ENCODE measurements at regions of chr12 and their contacts with region 1.

Region 1: DNA sequence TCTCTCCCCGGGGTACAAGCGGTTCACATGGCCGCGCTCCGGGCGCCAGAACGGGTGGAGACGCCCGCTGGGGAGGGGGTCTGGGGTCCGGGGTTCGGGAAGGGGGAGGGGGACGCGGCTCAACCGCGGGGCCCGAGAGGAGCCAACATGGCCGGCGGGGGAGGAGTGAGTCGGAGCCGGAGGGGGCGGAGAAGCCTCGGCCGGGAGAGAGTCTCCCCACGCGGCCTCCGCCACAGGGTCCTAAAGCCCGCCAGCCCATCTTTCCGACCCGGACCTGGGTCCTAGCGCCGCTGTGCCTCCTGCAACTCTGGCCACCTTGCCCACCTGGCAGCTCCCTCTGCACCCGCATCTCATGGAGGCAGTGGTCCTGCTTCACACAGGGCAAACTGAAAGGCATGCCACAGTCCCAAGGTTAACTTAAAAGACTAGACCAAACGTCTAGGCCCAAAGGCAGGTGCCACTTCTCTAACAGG is at the start of gene BAZ2A:
- DNase-seq: peak; percentile 93
- H3K4me3 ChIP-seq: peak within 1 kb of the TSS; percentile 88 to 100 (median 97)
- H3K27ac ChIP-seq: peak within 1 kb of the TSS; percentile 96 to 98 (median 97)
- H3K4me1 ChIP-seq: peaks cover 0 to 73% (median 71%) of the 10 kb centered on the region in 4 donors
- H3K27me3 ChIP-seq: no peaks in the 10 kb centered on the region
- CTCF ChIP-seq: no peak
- EP300 ChIP-seq: peak in 1 of 4 donors; percentile 34
- POLR2A ChIP-seq: peak in 1 of 2 donors; percentile 8
- total RNA-seq, gene BAZ2A: 39.6 to 91.1 (median 46.8) TPM

Region 2: DNA sequence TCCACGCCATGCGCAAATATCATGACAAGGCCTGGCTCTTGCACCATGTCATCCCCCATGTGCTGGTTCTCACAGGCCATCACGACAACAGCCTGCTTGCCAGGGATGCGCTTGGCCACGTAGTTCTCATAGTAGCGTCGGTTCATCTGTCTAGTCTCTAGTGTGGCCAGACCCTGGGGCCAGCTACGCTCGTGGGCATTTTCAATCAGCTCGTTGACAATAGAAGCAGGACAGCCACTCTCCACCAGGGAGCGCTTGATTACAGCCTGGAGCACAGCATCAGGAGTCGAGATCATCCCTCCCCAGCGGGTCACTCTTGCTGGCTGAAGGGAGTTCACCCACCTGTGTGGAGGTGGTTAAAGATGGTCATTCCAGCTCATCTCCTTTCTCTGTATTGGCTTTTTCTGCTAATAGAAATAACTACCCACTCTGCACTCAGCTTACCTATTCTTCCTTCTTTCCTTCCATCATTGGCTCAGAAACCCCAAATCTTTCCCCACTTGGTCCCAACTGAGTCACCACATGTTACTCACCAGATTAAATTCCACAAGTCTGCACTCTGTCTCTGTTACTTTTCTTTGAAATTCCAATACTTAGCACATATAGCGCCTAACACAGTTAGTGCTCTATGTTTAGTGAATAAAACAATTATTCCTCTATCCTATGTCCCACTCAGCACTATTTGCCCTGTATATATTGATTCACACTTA is 423.6 kb before region 1 on chr12:
- intact Hi-C with region 1: no loop called
- DNase-seq: peak; percentile 77
- H3K4me3 ChIP-seq: no peak overlapping the region
- H3K27ac ChIP-seq: peak overlapping the region; percentile 12 to 51 (median 36)
- H3K4me1 ChIP-seq: peaks cover 0 to 5% (median 0%) of the 10 kb centered on the region in 4 donors
- H3K27me3 ChIP-seq: no peaks in the 10 kb centered on the region
- CTCF ChIP-seq: peak; percentile 41 to 72 (median 64)
- EP300 ChIP-seq: no peak
- POLR2A ChIP-seq: no peak

Region 3: DNA sequence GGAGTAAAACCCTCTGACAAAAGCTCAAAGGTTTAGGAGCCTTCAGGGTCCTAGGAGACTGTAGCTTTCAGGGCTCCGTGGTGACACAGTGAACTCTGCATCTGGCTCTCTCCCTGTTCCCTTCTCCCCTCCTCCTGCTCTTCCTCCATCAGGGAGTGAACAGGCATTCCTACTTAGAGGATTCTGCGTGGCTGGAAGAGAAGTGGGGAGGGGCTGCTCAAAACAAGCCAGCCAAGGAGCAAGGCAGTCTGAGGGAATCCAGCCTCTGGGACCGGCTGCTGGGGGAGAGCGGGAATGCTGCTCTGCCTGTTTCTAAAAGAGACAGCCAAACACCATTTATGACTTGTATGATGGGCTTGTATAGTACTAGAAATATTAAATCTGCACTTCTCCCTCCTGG is 59.1 kb before region 1 on chr12:
- intact Hi-C with region 1: loop called (anchors 5 kb)
- DNase-seq: no peak
- H3K4me3 ChIP-seq: no peak overlapping the region
- H3K27ac ChIP-seq: peak overlapping the region; percentile 37 to 61 (median 46)
- H3K4me1 ChIP-seq: peaks cover 0 to 19% (median 12%) of the 10 kb centered on the region in 4 donors
- H3K27me3 ChIP-seq: no peaks in the 10 kb centered on the region
- CTCF ChIP-seq: no peak
- EP300 ChIP-seq: no peak
- POLR2A ChIP-seq: no peak

Region 4: GRCh38 chr12:56709759-56710376 is 79.7 kb after region 1 on chr12:
- intact Hi-C with region 1: no loop called
- DNase-seq: no peak
- H3K4me3 ChIP-seq: no peak overlapping the region
- H3K27ac ChIP-seq: no peak overlapping the region
- H3K4me1 ChIP-seq: no peaks in the 10 kb centered on the region
- H3K27me3 ChIP-seq: no peaks in the 10 kb centered on the region
- CTCF ChIP-seq: no peak
- EP300 ChIP-seq: no peak
- POLR2A ChIP-seq: no peak

Measured in sigmoid colon (tissue), 7 donors.